RWPE1 (cell line): ENCODE measurements at regions of chr6 and their contacts with region 1.

Region 1: DNA sequence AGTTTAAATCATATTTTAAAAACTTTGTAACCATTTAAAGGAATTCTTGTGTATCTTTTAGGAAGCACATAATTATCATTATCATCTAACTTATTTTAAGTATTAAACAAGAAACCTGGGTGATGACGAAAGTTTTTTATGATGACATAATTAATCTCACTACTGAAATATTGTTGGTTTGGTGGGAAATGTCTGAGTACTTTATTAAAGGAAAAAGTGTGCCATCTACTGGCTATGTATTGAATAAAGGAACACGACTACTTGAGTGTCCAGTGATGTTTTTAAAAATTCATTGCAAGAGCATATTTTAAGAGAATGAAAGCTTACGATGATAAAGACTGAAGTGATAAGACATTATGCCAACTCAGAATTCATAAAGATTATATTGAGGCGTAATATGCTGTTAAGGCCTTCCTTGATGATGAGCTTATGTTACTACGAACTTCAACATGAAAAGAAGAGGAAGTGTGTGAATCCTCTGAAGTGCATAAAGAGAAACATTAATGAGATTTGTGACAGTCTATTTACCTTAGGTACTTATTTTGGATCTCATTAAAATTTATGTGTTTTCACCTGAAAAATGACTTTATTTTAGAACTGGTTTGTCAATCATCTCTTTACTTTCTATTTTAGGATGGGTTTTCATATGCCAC is 12.0 kb upstream of the TRMT11 start:
- DNase-seq: no peak
- H3K27ac ChIP-seq: no peak overlapping the region
- CTCF ChIP-seq: peak; percentile 63

Region 2: DNA sequence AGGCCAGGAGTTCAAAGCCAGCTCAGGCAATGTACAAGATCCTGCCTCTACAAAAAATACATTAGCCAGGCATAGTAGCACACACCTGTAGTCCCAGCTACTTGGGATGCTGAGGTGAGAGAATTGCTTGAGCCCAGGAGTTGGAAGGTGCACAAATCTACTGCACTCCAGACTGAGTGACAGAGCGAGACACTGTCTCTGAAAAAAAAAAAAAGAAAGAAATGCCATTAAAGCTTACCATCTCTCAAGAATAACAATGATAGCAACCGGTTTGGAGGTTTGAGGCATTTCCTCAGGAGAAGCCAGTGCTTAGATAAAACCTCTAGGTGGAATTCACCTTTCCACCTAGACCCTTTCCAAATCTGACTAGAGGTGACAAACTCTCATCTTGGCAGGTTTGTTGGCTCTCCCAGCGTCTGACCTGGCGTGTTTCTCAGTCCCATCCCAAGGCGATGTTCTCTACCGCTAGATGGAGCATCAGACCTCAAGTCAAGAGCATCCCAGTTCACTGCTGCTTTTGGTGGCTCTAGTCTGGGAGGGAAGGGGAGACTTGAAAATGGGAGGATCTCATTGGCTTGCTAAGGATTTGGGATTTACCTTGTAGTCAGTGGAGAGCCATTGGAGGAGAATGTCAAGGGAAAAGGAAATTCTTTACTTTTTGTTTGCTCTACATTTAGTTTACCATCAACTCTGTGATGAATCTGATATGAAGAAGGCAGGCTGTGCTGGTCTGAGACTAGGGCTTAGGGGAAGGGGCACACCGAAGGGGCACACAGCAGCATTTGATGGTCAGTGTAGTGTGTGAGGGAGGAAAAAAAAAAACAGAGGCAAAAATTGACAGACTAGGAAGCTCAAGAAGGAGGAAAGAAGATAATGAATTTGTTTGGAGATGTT is 115.7 kb before region 1 on chr6:
- CTCF ChIA-PET with region 1: interaction called, 12 read pairs
- POLR2A ChIA-PET with region 1: no interaction called
- DNase-seq: peak; percentile 84
- H3K27ac ChIP-seq: no peak overlapping the region
- CTCF ChIP-seq: peak; percentile 87

Region 3: DNA sequence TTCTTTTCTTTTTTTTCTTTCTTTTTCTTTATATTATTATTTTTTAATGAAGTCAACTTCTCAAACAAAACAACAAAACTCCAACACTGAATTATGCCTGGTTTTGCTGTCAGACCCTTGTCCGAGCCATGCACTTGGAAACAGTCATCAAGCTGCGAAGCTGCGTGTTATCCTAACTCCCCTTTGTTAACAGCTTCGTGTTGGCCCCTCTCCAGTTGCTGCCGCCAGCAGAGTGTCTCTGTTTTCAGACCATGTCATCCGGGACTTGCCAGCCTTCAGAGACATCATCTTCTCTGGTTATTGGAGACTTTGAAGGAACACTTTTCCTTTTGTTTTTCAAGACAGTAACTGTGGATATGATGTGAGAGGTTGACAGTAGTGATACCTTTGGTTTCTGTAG is 95.1 kb after region 1 on chr6:
- CTCF ChIA-PET with region 1: no interaction called
- POLR2A ChIA-PET with region 1: no interaction called
- DNase-seq: no peak
- H3K27ac ChIP-seq: no peak overlapping the region
- CTCF ChIP-seq: no peak

Region 4: GRCh38 chr6:126107475-126108166 is 133.3 kb after region 1 on chr6:
- CTCF ChIA-PET with region 1: no interaction called
- POLR2A ChIA-PET with region 1: no interaction called
- DNase-seq: no peak
- H3K27ac ChIP-seq: no peak overlapping the region
- CTCF ChIP-seq: no peak

Region 5: GRCh38 chr6:126481319-126481718 is 507.0 kb after region 1 on chr6:
- CTCF ChIA-PET with region 1: no interaction called
- POLR2A ChIA-PET with region 1: no interaction called
- DNase-seq: no peak
- H3K27ac ChIP-seq: no peak overlapping the region
- CTCF ChIP-seq: no peak